Mammary epithelial cell (primary cell): ENCODE measurements at regions of chr11 and their contacts with region 1.

Region 1: GRCh38 chr11:96314326-96315020 is 28.5 kb downstream of the MAML2 start:
- DNase-seq: peak; percentile 49
- H3K4me3 ChIP-seq: no peak overlapping the region
- H3K27ac ChIP-seq: peak overlapping the region; percentile 84
- H3K4me1 ChIP-seq: peaks cover 85% of the 10 kb centered on the region
- H3K27me3 ChIP-seq: no peaks in the 10 kb centered on the region
- CTCF ChIP-seq: no peak

Region 2: DNA sequence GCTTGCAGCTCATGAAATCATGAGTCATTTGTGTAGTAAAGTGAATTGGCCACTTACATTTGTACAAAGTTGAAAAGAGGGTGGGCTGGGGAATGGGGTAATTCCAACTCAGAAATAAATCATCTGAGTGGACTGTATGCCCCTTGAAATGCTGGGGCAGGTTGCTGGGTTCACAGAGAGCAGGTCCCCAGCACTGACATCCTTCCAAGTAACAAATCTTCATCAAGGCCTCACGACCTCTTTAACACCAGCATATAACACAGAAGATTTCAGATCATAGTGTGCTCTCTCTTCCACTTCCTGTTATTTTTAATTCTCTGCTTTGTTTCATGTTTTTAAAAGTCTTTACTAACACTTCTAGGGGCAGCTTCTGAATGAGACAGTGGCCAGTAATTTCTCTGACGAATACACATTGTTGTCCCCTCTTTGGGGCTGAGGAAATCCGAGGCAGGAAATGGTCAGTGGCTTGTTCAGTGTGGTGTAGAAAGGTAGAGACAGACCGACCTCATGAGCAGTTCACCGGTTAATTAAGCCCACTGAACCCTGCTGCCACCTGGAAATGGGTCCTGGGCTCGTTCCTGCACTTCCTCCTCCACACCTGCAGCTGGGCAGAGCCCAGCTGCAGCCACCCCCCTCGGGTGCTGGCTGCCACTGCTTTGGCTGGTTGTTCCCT is 99.2 kb before region 1 on chr11:
- CTCF ChIA-PET with region 1: no interaction called
- dilution Hi-C with region 1: loop called (anchors 5 kb)
- in situ Hi-C with region 1: no loop called
- intact Hi-C with region 1: no loop called
- DNase-seq: no peak
- H3K4me3 ChIP-seq: no peak overlapping the region
- H3K27ac ChIP-seq: no peak overlapping the region
- H3K4me1 ChIP-seq: peaks cover 34% of the 10 kb centered on the region
- H3K27me3 ChIP-seq: no peaks in the 10 kb centered on the region
- CTCF ChIP-seq: no peak

Region 3: DNA sequence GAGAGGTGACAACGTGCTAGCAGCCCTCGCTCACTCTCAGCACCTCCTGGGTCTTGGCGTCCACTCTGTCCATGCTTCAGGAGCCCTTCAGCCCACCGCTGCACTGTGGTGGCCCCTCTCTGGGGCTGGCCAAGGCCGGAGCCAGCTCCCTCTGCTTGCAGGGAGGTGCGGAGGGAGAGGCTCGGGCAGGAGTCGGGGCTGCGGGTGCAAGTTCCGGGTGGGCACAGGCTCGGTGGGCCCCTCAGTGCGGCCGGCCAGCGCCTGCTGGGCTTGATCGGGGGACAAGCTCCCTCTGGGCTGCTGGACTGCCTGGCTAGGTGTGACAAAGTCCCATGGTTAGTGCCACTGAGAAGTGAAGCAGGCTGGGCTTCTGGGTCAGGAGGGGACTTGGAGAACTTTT is 321.2 kb after region 1 on chr11:
- CTCF ChIA-PET with region 1: no interaction called
- dilution Hi-C with region 1: no loop called
- in situ Hi-C with region 1: no loop called
- intact Hi-C with region 1: no loop called
- DNase-seq: no peak
- H3K4me3 ChIP-seq: no peak overlapping the region
- H3K27ac ChIP-seq: no peak overlapping the region
- H3K4me1 ChIP-seq: no peaks in the 10 kb centered on the region
- H3K27me3 ChIP-seq: no peaks in the 10 kb centered on the region
- CTCF ChIP-seq: no peak